GM10248 (cell line): ENCODE measurements at regions of chr2 and their contacts with region 1.

Region 1: DNA sequence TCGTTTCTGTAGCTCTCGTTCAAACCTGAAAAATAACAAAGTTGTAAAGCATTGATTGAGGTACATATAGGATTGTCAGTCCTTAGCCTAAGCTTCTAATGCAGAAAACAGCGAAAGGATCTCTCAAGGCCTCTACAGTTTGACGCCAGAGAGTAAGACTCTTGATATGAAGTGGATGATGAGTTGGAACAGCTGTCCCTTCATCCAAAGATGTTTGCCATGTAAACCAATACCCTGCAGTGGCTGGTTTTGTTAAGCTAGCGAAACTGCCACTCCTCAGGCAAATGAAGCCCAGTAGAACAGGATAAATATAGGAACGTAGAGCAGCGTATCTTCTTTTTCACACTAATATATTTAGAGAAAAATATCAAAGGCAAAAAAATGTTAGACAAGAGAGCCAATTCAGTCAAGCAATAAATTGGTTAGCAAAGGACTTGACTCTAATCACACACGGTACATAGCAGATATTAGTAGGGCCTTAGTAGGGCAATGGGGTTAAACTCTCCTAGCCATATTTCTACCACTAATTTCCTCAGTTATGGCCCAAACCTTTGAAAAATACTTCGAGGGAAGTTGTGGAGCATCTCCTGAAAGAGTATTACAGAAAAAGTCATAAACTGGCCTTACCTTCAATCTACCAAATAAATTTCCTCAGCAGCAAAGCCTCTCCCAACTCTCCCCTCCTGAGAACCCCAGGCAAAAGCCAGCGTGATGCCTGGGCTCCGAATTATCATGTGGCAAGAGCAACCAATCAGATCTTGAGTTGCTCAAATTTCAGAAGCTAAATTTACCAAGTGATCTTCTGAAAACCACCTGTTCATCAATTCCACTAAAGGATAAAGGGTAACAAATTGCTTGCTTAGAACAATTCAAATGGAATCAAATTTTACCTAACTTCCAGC is at the start of gene NEB:
- DNase-seq: no peak
- CTCF ChIP-seq: no peak

Region 2: GRCh38 chr2:151395509-151396374 is 338.3 kb before region 1 on chr2:
- CTCF ChIA-PET with region 1: no interaction called
- POLR2A ChIA-PET with region 1: no interaction called
- DNase-seq: no peak
- CTCF ChIP-seq: no peak

Region 3: DNA sequence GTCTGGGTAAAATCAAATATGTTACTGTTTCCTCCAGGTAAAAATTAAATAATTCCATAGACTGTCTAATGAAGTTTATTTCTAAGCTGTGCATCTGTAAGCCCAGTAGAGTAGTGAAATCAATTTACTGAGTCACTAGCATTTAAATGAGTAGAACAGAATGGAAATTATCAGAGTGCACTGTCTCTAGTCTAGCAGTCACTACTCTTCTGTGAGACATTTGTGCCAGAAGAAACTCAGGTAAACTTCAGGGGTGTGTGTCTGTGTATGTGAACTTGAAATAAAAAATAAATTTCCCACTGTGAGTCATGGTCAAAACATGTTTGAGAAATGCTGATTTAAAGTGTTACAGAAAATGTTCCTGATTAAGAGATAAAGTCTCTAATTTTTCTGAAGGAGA is 177.9 kb before region 1 on chr2:
- CTCF ChIA-PET with region 1: no interaction called
- POLR2A ChIA-PET with region 1: no interaction called
- DNase-seq: no peak
- CTCF ChIP-seq: no peak

Region 4: DNA sequence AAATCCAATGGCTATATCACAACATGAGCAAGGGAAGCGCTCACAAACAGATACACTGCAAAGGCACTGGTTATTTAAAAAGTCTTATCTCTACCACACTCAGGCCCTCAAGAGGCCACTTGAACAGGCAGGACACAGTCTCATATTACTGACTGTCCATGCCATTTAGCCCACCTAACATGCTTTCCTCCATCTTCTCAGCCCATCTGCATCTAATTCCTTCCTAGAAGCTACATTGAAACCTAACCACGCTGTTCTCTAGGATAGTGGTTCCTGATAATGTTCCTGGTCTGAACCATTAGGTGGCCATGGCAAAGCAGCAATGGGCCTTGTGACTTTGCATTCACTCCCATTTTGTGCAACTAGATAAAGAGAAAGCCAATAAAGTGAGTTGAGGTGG is 22.8 kb after region 1 on chr2:
- CTCF ChIA-PET with region 1: interaction called, 12 read pairs
- POLR2A ChIA-PET with region 1: no interaction called
- DNase-seq: no peak
- CTCF ChIP-seq: no peak